Activated CD8-positive, alpha-beta T cell treated with anti-CD3 and anti-CD28 coated beads for 36 hours (primary cell): ENCODE measurements at regions of chr17 and their contacts with region 1.

Region 1: GRCh38 chr17:45277216-45277849 is 15.4 kb upstream of the SPATA32 start:
- DNase-seq: peak; percentile 98
- ATAC-seq: peak; percentile 95
- H3K4me3 Mint-ChIP-seq: no peak overlapping the region
- H3K27ac Mint-ChIP-seq: peak overlapping the region; percentile 53
- H3K4me1 Mint-ChIP-seq: peaks cover 15% of the 10 kb centered on the region
- H3K27me3 Mint-ChIP-seq: no peaks in the 10 kb centered on the region
- CTCF ChIP-seq: peak; percentile 78

Region 2: DNA sequence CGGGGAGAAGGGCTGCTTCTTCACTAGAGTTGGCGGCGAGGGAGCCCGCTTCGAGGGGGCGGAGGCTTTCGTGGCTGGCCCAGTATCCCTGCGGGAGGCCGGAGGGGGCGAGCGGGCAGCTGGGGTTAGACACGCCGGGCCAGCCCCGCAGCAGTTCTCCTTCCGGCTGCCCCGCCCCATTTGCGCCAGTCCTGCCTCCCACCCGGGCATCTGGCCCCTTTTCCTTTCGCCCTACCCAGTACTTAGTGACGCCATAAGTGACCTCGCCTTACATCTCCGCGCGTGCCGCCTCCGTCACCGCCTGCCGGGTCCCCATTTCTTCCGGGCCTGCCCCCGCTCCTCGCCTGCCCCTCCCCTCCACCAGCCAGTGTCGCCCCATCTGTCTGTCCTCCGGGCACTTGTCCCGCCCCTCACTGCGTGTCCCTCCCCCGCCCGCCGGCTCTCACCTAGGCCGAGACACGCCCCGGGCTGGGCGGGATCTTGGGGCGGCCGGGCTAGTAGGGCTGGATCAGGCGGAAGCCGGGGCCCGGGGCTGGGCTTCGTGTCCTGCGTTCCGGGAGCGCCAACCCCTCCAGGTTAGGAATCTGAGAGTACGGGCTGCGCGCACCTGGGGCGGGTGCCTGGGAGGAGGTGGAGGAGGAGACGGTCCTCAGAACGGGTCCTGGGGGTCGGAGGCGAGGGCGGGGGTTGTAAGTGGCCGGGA is 29.8 kb before region 1 on chr17:
- CTCF ChIA-PET with region 1: interaction called, 15 read pairs
- POLR2A ChIA-PET with region 1: interaction called, 4 read pairs
- intact Hi-C with region 1: no loop called
- DNase-seq: peak; percentile 100
- ATAC-seq: peak; percentile 91
- H3K4me3 Mint-ChIP-seq: peak overlapping the region; percentile 88
- H3K27ac Mint-ChIP-seq: peak overlapping the region; percentile 91
- H3K4me1 Mint-ChIP-seq: peaks cover 61% of the 10 kb centered on the region
- H3K27me3 Mint-ChIP-seq: no peaks in the 10 kb centered on the region
- CTCF ChIP-seq: no peak

Region 3: DNA sequence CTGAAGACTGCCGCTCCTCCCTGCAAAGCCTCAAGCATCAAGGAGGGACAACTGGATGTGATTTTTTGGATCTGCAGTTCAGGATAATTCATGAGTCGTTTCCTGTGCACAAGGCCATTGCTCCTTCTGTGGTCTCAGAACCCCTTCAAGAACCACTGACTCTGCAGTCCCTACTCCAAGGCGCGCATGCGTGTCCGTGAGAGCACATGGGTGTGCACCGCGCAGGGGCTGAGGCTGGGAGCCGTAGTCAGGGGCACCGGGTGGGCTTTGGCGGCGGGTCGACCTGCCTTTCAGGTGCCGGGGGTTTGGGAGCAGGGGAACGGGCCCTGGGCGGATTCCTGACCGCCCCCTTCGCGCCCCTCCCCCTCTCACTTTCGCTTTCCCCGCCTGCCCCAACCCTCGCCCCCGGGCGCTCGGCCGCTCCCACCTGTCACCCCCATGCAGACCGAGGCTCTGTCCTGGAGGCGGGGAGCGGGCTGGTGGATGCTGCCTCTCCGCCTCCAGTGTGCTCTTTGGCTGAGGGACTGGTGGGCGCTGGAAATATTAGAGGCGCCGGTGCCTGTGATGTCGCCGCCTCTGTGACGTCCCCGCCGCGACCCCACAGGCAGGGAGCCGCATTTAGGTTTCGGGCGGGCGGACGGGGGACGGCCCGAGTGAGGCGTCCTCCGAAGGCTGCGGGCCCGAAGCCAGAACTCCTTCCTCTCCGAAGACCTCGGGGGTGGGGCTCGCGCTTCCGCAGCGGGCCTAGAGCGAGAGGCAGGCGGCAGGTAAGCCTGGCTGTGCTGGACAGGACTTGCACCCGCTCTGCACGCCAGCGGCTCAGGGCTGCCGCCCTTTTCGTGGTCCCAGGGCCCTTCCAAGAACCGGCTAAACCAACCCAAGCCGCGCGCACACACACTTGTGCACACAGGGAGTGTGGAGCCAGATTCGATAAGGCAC is 15.5 kb before region 1 on chr17 and contains the start of gene SPATA32:
- CTCF ChIA-PET with region 1: interaction called, 25 read pairs
- POLR2A ChIA-PET with region 1: interaction called, 5 read pairs
- intact Hi-C with region 1: no loop called
- DNase-seq: peak; percentile 91
- ATAC-seq: peak; percentile 94
- H3K4me3 Mint-ChIP-seq: peak within 1 kb of the TSS; percentile 76
- H3K27ac Mint-ChIP-seq: peak within 1 kb of the TSS; percentile 85
- H3K4me1 Mint-ChIP-seq: peaks cover 34% of the 10 kb centered on the region
- H3K27me3 Mint-ChIP-seq: no peaks in the 10 kb centered on the region
- CTCF ChIP-seq: no peak
- total RNA-seq, gene SPATA32: 0.27 to 0.63 TPM

Region 4: GRCh38 chr17:45299339-45299738 is 22.0 kb after region 1 on chr17:
- CTCF ChIA-PET with region 1: interaction called, 81 read pairs
- POLR2A ChIA-PET with region 1: interaction called, 4 read pairs
- intact Hi-C with region 1: no loop called
- DNase-seq: no peak
- ATAC-seq: no peak
- H3K4me3 Mint-ChIP-seq: no peak overlapping the region
- H3K27ac Mint-ChIP-seq: peak overlapping the region; percentile 56
- H3K4me1 Mint-ChIP-seq: peaks cover 80% of the 10 kb centered on the region
- H3K27me3 Mint-ChIP-seq: no peaks in the 10 kb centered on the region
- CTCF ChIP-seq: no peak

Region 5: DNA sequence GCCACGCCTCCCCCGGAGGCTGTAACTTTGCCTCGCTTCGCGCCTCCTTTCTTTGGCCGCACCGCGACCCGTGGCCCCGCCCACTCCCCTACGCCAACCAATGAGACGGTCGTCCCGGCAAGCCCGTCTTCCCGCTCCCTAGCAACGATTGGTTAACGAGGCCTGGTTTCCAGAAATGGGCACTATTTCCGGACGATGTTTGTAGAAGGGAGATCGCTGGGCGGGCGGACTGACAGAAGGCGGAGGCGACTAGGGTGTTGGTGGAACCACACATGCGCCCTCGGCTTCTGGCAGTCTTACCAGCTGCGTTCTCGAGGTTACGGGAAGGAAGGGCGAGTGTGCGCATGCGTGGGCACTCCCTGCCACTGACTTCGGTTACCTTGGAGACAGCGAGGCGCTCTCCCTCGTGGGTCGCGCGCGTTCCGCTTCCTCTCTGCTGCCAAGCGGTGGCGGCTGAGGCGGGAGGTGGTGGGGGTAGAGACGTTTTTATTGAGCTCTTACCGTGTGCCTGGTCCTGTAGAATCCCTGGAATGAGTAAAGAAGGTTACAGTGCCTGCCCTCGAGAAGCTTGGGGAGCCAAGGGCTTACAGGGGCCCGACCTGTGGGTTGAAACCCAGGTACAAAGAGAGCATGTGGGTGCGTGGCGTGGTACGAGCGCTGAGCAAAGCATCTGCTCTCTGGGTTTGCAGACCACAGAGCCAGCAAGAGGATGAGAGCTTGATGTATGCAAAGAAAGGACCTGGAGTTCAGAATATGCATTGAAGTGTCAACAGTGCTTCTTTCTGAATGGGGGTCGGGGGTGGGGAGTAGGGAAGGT is 40.0 kb after region 1 on chr17:
- CTCF ChIA-PET with region 1: interaction called, 56 read pairs
- POLR2A ChIA-PET with region 1: interaction called, 11 read pairs
- intact Hi-C with region 1: loop called (anchors 5 kb)
- DNase-seq: peak; percentile 100
- ATAC-seq: peak; percentile 81
- H3K4me3 Mint-ChIP-seq: peak overlapping the region; percentile 81
- H3K27ac Mint-ChIP-seq: peak overlapping the region; percentile 88
- H3K4me1 Mint-ChIP-seq: peaks cover 60% of the 10 kb centered on the region
- H3K27me3 Mint-ChIP-seq: no peaks in the 10 kb centered on the region
- CTCF ChIP-seq: no peak

Region 6: DNA sequence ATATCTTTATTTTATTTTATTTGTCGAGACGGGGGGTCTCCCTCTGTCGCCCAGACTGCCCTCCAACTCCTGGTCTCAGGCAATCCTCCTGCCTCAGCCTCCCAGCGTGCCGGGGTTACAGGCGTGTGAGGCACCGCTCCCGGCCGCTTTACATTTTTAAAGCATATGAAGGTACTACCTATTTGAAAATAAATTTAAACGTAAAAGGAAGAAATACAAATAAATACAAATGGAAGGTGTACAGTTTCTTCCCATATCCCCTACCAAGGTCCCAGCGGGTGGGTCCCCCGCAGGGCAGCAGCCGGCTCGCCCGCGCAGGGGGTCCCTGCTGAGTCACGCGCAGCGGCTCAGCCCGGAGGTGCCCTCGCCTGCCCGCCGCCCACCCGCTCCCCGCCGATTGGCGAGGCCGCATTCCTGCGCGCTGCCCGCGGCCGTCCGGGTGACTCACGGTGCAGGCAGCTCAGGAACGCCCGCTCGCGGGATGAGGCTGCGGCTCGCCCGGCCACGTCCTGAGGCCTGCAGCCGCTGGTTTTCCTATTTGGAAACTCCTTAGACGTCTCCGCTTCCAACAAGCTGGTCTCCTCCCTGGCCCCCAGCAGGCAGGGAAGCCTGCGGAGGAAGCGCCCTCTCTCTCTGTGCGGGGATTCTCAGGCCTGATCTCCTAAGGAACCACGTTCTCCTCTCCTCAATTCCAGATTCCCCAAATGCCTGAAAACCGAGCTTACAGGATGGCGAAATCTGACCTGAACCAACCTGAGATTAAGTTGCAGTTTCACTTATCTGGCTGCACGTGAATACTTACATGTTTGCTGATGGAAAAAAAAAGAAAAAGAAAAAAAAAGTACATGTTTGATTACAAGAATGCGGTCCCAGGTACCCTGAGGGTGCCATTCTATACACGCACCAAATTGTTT is 94.3 kb after region 1 on chr17:
- CTCF ChIA-PET with region 1: interaction called, 23 read pairs
- POLR2A ChIA-PET with region 1: no interaction called
- intact Hi-C with region 1: no loop called
- DNase-seq: peak; percentile 70
- ATAC-seq: peak; percentile 91
- H3K4me3 Mint-ChIP-seq: peak overlapping the region; percentile 21
- H3K27ac Mint-ChIP-seq: no peak overlapping the region
- H3K4me1 Mint-ChIP-seq: peaks cover 16% of the 10 kb centered on the region
- H3K27me3 Mint-ChIP-seq: peaks cover 2% of the 10 kb centered on the region
- CTCF ChIP-seq: no peak

Region 7: GRCh38 chr17:45413498-45413923 is 136.2 kb after region 1 on chr17:
- CTCF ChIA-PET with region 1: no interaction called
- POLR2A ChIA-PET with region 1: no interaction called
- intact Hi-C with region 1: no loop called
- DNase-seq: no peak
- ATAC-seq: no peak
- H3K4me3 Mint-ChIP-seq: no peak overlapping the region
- H3K27ac Mint-ChIP-seq: no peak overlapping the region
- H3K4me1 Mint-ChIP-seq: peaks cover 21% of the 10 kb centered on the region
- H3K27me3 Mint-ChIP-seq: no peaks in the 10 kb centered on the region
- CTCF ChIP-seq: no peak